Caco-2 (cell line): ENCODE measurements at regions of chrX and their contacts with region 1.

Region 1: DNA sequence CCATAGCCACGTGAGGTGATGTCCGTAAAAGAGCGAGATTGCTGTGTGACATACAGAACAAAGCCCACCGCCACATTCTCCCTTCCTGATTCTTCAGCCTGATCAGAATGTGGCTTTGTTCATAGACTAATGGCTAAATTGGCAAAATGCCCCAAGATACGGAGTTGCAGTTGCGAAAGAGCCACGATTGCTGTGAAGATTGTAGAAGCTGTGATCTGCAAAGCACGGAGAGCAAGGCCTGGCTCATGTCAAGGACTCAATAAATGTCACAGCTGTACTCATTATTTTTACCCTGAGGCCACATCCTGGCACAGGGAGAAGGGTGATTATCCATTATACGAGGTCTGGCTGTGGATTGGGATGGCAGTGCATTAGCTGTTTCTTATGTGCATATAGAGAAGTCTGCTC is 34.2 kb downstream of the ARSD start:
- DNase-seq: peak in 1 of 2 experiments; percentile 44
- H3K4me3 ChIP-seq: no peak overlapping the region
- H3K4me3 Mint-ChIP-seq: no peak overlapping the region
- H3K27ac Mint-ChIP-seq: peak overlapping the region; percentile 86
- H3K4me1 ChIP-seq: peaks cover 35% of the 10 kb centered on the region
- H3K4me1 Mint-ChIP-seq: peaks cover 22% of the 10 kb centered on the region
- H3K27me3 ChIP-seq: no peaks in the 10 kb centered on the region
- H3K27me3 Mint-ChIP-seq: no peaks in the 10 kb centered on the region
- CTCF ChIP-seq: no peak

Region 2: GRCh38 chrX:2913118-2913517 is 18.2 kb after region 1 on chrX:
- CTCF ChIA-PET with region 1: no interaction called
- POLR2A ChIA-PET with region 1: interaction called, 5 read pairs
- intact Hi-C with region 1: loop called (anchors 2 kb)
- DNase-seq: peak in 1 of 2 experiments; percentile 30
- H3K4me3 ChIP-seq: no peak overlapping the region
- H3K4me3 Mint-ChIP-seq: peak overlapping the region; percentile 29
- H3K27ac Mint-ChIP-seq: peak overlapping the region; percentile 29
- H3K4me1 ChIP-seq: peaks cover 7% of the 10 kb centered on the region
- H3K4me1 Mint-ChIP-seq: peaks cover 25% of the 10 kb centered on the region
- H3K27me3 ChIP-seq: no peaks in the 10 kb centered on the region
- H3K27me3 Mint-ChIP-seq: no peaks in the 10 kb centered on the region
- CTCF ChIP-seq: peak in 1 of 2 experiments; percentile 23

Region 3: DNA sequence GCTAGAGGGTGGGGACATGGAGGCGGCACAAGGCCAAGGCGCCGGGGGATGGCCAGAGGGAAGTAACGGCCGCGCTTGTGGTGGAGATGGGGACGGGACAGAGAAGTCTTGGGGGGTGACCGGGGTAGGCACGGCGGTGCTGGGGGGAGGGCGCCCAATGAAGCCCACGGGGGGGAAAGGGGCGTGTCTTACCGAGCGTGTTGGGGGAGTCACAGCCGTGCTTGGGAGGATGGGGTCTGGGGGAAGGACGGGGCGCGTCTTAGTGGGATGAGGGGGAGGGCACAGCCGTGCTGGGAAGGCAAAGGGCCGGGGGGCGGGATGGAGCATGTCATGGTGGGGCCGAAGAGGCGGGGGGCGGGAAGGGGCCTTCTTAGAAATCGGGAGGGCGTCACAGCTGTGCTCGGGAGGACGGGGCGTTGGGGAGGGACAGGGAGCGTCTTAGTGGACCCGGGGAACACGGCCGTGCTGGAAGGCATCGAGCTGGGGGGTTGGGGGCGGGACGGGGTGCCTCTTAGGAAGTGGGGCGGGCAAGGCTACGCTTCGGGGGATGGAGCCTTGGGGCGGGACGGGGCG is 33.4 kb after region 1 on chrX:
- CTCF ChIA-PET with region 1: no interaction called
- POLR2A ChIA-PET with region 1: interaction called, 3 read pairs
- intact Hi-C with region 1: loop called (anchors 2 kb)
- DNase-seq: no peak
- H3K4me3 ChIP-seq: no peak overlapping the region
- H3K4me3 Mint-ChIP-seq: peak overlapping the region; percentile 63
- H3K27ac Mint-ChIP-seq: no peak overlapping the region
- H3K4me1 ChIP-seq: no peaks in the 10 kb centered on the region; the same call in 1 of the 2 replicates
- H3K4me1 Mint-ChIP-seq: no peaks in the 10 kb centered on the region
- H3K27me3 ChIP-seq: no peaks in the 10 kb centered on the region
- H3K27me3 Mint-ChIP-seq: no peaks in the 10 kb centered on the region
- CTCF ChIP-seq: no peak

Region 4: DNA sequence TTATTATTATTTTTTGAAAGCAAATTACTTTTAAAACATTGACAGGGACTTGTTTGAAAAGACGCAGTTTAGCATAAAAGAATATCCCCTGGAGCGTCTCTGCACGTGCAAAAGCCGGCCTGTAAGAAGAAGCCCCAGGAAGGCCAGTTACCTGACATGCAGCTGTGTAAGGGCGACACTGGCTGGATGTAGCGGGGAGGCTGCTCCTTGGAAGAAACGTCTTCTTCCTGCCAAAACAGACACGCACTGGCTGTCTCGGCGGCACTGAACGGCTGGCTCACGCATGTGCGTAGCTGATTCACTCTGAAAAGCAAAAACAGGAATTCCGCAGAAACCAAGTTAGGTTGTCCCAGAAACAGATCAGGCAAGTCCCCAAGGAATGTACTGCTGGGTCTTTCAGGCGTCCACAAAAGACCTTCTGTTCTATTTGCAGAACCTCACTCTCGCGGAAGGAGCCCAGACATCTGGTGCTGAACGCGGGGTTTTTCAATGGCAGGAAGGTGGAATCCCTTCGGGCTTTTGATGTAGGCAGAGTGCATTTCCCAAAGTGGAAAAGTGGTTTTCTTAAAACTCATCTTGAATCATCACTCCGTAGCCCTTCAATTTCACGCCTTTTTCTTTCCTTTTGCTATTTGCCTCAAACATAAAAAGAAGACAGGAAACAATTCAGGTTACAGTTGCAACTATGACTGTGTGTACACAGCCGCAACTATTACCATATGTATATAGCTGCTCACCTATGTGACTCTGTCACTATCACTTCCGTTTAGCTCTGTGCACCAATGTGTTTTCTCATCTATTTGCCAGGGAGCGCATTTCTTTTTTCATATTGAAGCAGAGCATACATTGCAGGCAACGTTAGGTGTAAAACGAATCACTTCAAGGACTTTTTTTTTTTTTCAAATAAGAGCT is 73.4 kb after region 1 on chrX:
- CTCF ChIA-PET with region 1: no interaction called
- POLR2A ChIA-PET with region 1: no interaction called
- intact Hi-C with region 1: loop called (anchors 1 kb)
- DNase-seq: peak; percentile 18 to 42
- H3K4me3 ChIP-seq: peak overlapping the region; percentile 27
- H3K4me3 Mint-ChIP-seq: peak overlapping the region; percentile 60
- H3K27ac Mint-ChIP-seq: no peak overlapping the region
- H3K4me1 ChIP-seq: peaks cover 4% of the 10 kb centered on the region; the same call in 1 of the 2 replicates
- H3K4me1 Mint-ChIP-seq: no peaks in the 10 kb centered on the region
- H3K27me3 ChIP-seq: no peaks in the 10 kb centered on the region
- H3K27me3 Mint-ChIP-seq: no peaks in the 10 kb centered on the region
- CTCF ChIP-seq: no peak

Region 5: DNA sequence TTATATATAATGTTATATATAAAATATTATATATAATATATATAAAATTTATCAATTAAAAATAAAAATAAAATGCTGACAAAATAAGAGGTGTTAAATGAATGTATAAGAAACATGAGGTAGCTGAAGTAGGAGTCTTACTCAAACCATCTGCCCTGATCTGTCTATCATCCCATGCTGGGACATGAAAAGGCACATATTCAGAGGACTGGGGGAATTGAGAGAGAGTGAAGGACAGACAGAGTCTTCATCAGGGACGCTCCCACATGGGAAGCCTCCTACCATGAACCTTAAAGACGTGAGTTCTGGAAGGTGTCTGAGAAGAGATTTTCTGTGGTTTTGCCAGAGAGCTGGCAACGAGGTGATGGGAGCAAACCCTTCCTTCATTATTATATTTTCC is 142.3 kb after region 1 on chrX:
- CTCF ChIA-PET with region 1: no interaction called
- POLR2A ChIA-PET with region 1: no interaction called
- intact Hi-C with region 1: loop called (anchors 5 kb)
- DNase-seq: no peak
- H3K4me3 ChIP-seq: no peak overlapping the region
- H3K4me3 Mint-ChIP-seq: no peak overlapping the region
- H3K27ac Mint-ChIP-seq: no peak overlapping the region
- H3K4me1 ChIP-seq: no peaks in the 10 kb centered on the region
- H3K4me1 Mint-ChIP-seq: no peaks in the 10 kb centered on the region
- H3K27me3 ChIP-seq: no peaks in the 10 kb centered on the region
- H3K27me3 Mint-ChIP-seq: no peaks in the 10 kb centered on the region
- CTCF ChIP-seq: no peak